ENCODE measurements at regions of chr6 and their contacts with region 1.

Region 1: GRCh38 chr6:119322715-119323350 is 26.7 kb downstream of the MAN1A1 start:
- DNase-seq: peak; percentile 74
- ATAC-seq: peak; percentile 92
- H3K4me3 Mint-ChIP-seq: no peak overlapping the region
- H3K27ac Mint-ChIP-seq: peak overlapping the region; percentile 66
- H3K4me1 Mint-ChIP-seq: peaks cover 22% of the 10 kb centered on the region
- H3K27me3 Mint-ChIP-seq: no peaks in the 10 kb centered on the region
- CTCF ChIP-seq: no peak

Region 2: DNA sequence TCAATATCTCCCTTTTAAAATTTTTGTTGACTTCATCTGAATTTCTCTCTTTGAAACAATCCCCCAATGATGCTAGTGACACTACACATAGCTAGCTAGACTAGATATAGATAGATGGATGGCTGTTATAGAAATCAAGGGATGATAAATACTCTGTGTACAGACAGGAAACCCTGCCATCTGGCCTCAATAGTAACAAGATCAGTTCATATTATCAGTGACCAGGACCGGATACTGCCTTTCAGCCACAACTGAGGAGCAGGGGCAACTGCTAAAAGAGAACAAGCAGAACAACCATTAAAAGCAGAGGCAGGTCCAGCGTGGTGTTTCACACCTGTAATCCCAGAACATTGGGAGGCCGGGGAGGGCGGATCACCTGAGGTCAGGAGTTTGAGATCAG is 126.1 kb before region 1 on chr6:
- CTCF ChIA-PET with region 1: no interaction called
- POLR2A ChIA-PET with region 1: no interaction called
- intact Hi-C with region 1: no loop called
- DNase-seq: no peak
- ATAC-seq: no peak
- H3K4me3 Mint-ChIP-seq: no peak overlapping the region
- H3K27ac Mint-ChIP-seq: no peak overlapping the region
- H3K4me1 Mint-ChIP-seq: no peaks in the 10 kb centered on the region
- H3K27me3 Mint-ChIP-seq: no peaks in the 10 kb centered on the region
- CTCF ChIP-seq: no peak

Region 3: GRCh38 chr6:119259027-119259426 is 63.8 kb before region 1 on chr6:
- CTCF ChIA-PET with region 1: no interaction called
- POLR2A ChIA-PET with region 1: no interaction called
- intact Hi-C with region 1: no loop called
- DNase-seq: no peak
- ATAC-seq: no peak
- H3K4me3 Mint-ChIP-seq: no peak overlapping the region
- H3K27ac Mint-ChIP-seq: no peak overlapping the region
- H3K4me1 Mint-ChIP-seq: peaks cover 35% of the 10 kb centered on the region
- H3K27me3 Mint-ChIP-seq: no peaks in the 10 kb centered on the region
- CTCF ChIP-seq: no peak

Region 4: DNA sequence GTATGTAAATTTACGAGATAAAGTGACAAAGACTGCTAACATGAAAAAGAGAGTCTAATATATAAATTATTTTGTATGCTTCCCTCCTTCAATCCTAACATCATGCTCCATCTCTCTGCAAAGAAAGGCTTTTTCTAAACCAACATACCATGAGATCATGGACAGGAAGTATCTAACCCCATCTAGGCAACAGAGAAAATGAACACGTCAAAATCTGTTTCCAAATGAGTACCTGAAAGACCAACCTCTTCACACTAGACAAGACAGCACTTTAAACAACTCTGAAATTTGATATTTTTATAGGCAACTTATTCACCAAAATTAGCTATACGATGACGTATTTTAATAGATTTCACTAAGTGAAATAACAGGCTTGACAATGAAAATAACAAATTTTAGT is 27.8 kb before region 1 on chr6:
- CTCF ChIA-PET with region 1: no interaction called
- POLR2A ChIA-PET with region 1: no interaction called
- intact Hi-C with region 1: no loop called
- DNase-seq: no peak
- ATAC-seq: peak; percentile 94
- H3K4me3 Mint-ChIP-seq: no peak overlapping the region
- H3K27ac Mint-ChIP-seq: no peak overlapping the region
- H3K4me1 Mint-ChIP-seq: peaks cover 16% of the 10 kb centered on the region
- H3K27me3 Mint-ChIP-seq: no peaks in the 10 kb centered on the region
- CTCF ChIP-seq: no peak

Region 5: DNA sequence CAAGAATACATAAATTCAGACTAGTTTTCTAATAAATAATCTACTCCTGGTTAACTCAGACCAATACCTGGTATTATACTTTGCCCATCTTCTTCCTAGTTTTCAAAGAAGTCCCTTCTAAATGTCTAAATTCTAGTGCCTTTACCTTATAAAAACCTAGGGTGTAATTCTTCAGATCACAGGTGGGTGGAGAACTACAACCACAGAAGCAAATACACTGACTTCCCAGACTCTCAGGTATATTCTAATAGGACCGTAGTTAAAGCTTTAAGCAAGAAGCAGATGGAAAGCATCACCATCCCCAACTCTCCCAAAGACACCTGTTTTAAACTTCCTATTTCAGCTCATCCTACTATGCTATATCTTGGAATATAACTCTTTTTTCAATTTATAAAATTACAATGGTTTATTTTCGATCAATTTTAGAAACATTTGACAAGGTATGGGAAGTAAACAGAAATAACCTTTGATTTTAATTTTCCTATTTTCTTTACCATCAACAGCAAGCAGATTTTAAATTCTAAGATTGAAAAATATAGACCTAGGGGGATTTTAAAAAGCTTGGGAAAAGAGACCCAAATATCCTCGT is 11.0 kb after region 1 on chr6:
- CTCF ChIA-PET with region 1: interaction called, 12 read pairs
- POLR2A ChIA-PET with region 1: no interaction called
- intact Hi-C with region 1: no loop called
- DNase-seq: no peak
- ATAC-seq: peak; percentile 69
- H3K4me3 Mint-ChIP-seq: no peak overlapping the region
- H3K27ac Mint-ChIP-seq: no peak overlapping the region
- H3K4me1 Mint-ChIP-seq: peaks cover 40% of the 10 kb centered on the region
- H3K27me3 Mint-ChIP-seq: no peaks in the 10 kb centered on the region
- CTCF ChIP-seq: peak; percentile 64